Mammary epithelial cell (primary cell): ENCODE measurements at regions of chr5 and their contacts with region 1.

Region 1: GRCh38 chr5:119332978-119333401 is 22.8 kb upstream of the TNFAIP8 start:
- DNase-seq: peak; percentile 77
- H3K4me3 ChIP-seq: peak overlapping the region in 1 of 3 experiments; percentile 1
- H3K27ac ChIP-seq: peak overlapping the region; percentile 78
- H3K4me1 ChIP-seq: peaks cover 38% of the 10 kb centered on the region
- H3K27me3 ChIP-seq: no peaks in the 10 kb centered on the region
- CTCF ChIP-seq: no peak

Region 2: DNA sequence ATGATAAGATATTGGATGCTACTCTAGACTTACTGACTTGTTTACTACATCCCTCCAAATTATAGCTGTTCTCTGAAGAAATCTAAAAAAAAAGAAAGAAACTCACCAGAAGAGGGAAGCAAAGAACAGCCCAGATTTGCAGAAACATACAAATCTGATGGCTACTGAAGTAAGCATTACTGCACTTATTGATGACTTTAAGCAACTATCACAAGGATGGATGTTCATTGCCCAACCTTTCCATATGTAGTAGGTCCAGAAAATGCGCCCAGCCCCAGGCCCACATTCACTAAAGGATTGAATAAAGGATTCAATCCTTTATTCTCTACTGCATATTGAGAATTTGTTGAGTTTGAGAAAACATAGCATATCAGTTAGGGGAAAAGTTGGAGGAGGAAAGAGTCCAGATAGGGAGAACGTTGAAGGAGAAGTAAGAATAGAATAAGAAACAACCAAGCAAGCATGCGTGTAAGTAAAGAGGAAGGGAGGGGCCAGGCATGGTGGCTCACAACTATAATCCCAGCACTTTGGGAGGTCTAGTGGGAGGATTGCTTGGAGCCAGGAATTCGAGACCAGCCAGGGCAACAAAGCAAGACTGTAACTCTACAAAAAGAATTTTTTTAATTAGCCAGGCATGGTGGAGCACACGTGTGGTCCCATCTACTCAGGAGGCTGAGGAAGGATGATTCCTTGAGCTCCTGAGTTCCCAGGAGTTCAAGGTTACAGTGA is 310.8 kb before region 1 on chr5:
- CTCF ChIA-PET with region 1: no interaction called
- dilution Hi-C with region 1: no loop called
- in situ Hi-C with region 1: no loop called
- intact Hi-C with region 1: loop called (anchors 1 kb)
- DNase-seq: peak; percentile 25
- H3K4me3 ChIP-seq: no peak overlapping the region
- H3K27ac ChIP-seq: no peak overlapping the region
- H3K4me1 ChIP-seq: no peaks in the 10 kb centered on the region
- H3K27me3 ChIP-seq: no peaks in the 10 kb centered on the region
- CTCF ChIP-seq: peak; percentile 39 to 60

Region 3: GRCh38 chr5:119168401-119168800 is 164.6 kb before region 1 on chr5:
- CTCF ChIA-PET with region 1: no interaction called
- dilution Hi-C with region 1: no loop called
- in situ Hi-C with region 1: no loop called
- intact Hi-C with region 1: loop called (anchors 10 kb)
- DNase-seq: no peak
- H3K4me3 ChIP-seq: no peak overlapping the region
- H3K27ac ChIP-seq: no peak overlapping the region
- H3K4me1 ChIP-seq: no peaks in the 10 kb centered on the region
- H3K27me3 ChIP-seq: no peaks in the 10 kb centered on the region
- CTCF ChIP-seq: no peak

Region 4: GRCh38 chr5:119274767-119275130 is 58.2 kb before region 1 on chr5:
- CTCF ChIA-PET with region 1: interaction called, 3 read pairs
- dilution Hi-C with region 1: loop called (anchors 5 kb)
- in situ Hi-C with region 1: no loop called
- intact Hi-C with region 1: no loop called
- DNase-seq: peak; percentile 83
- H3K4me3 ChIP-seq: no peak overlapping the region
- H3K27ac ChIP-seq: peak overlapping the region; percentile 82
- H3K4me1 ChIP-seq: peaks cover 47% of the 10 kb centered on the region
- H3K27me3 ChIP-seq: no peaks in the 10 kb centered on the region
- CTCF ChIP-seq: no peak

Region 5: GRCh38 chr5:119360905-119361593 is 28.1 kb after region 1 on chr5:
- CTCF ChIA-PET with region 1: no interaction called
- dilution Hi-C with region 1: no loop called
- in situ Hi-C with region 1: no loop called
- intact Hi-C with region 1: loop called (anchors 2 kb)
- DNase-seq: peak; percentile 91
- H3K4me3 ChIP-seq: peak overlapping the region in 1 of 3 experiments; percentile 2
- H3K27ac ChIP-seq: peak overlapping the region; percentile 81
- H3K4me1 ChIP-seq: peaks cover 74% of the 10 kb centered on the region
- H3K27me3 ChIP-seq: no peaks in the 10 kb centered on the region
- CTCF ChIP-seq: no peak

Region 6: GRCh38 chr5:119411935-119412602 is 79.1 kb after region 1 on chr5:
- CTCF ChIA-PET with region 1: interaction called, 17 read pairs
- dilution Hi-C with region 1: no loop called
- in situ Hi-C with region 1: loop called in 1 of 2 experiments (anchors 10 kb)
- intact Hi-C with region 1: loop called (anchors 1 kb)
- DNase-seq: peak; percentile 71
- H3K4me3 ChIP-seq: peak overlapping the region; percentile 49 to 62 (median 54)
- H3K27ac ChIP-seq: peak overlapping the region; percentile 97
- H3K4me1 ChIP-seq: peaks cover 12% of the 10 kb centered on the region
- H3K27me3 ChIP-seq: no peaks in the 10 kb centered on the region
- CTCF ChIP-seq: peak; percentile 71 to 97

Region 7: GRCh38 chr5:119527351-119527750 is 194.4 kb after region 1 on chr5:
- CTCF ChIA-PET with region 1: no interaction called
- dilution Hi-C with region 1: no loop called
- in situ Hi-C with region 1: no loop called
- intact Hi-C with region 1: no loop called
- DNase-seq: peak; percentile 31
- H3K4me3 ChIP-seq: no peak overlapping the region
- H3K27ac ChIP-seq: no peak overlapping the region
- H3K4me1 ChIP-seq: peaks cover 9% of the 10 kb centered on the region
- H3K27me3 ChIP-seq: no peaks in the 10 kb centered on the region
- CTCF ChIP-seq: no peak

Region 8: GRCh38 chr5:120778491-120779484 is 1445.8 kb after region 1 on chr5:
- CTCF ChIA-PET with region 1: no interaction called
- dilution Hi-C with region 1: no loop called
- in situ Hi-C with region 1: no loop called
- intact Hi-C with region 1: no loop called
- DNase-seq: peak; percentile 22
- H3K4me3 ChIP-seq: no peak overlapping the region
- H3K27ac ChIP-seq: no peak overlapping the region
- H3K4me1 ChIP-seq: no peaks in the 10 kb centered on the region
- H3K27me3 ChIP-seq: no peaks in the 10 kb centered on the region
- CTCF ChIP-seq: no peak